ENCODE measurements at regions of chr5 and their contacts with region 1.

Region 1: DNA sequence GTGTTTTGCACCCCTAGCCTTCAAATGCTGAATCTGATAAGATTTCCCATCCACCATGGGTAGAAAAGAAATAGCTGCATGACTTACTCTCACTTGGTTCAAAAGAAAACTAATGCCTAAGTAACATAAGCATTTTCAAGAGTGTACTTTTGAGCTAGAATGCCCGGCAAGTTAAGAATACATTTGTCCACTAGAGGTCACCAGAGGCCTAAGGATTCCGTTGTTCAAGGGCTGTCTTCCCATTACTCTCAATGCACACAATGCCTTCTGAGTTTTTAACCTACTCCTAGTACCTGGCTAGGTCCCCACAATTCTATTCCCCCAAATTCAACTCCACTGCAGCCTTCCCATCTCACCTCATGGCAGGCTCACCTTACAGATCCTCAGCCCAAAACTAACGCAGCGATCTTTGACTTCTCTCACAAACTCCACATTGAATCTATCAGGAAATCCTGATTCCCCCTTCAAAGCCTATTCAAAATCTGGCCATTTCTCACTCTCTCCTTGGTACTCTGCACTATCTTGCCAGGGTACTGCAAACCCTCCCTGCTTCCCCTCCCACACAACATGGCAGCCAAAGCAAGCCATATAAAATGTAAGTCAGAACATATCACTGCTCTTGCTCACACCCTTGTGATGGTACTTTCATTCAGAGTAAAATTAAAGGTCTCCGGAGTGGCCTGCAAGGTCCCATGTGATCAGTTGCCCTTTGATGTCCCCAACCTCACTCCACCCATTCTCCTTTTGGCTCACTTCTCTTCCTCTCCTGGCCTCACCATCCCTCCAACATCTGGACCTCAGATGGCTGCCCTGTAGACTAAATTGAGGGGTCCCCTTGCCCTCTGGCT is 13.4 kb downstream of the OXCT1 start:
- DNase-seq: peak; percentile 64

Region 2: GRCh38 chr5:42057254-42057690 is 200.4 kb after region 1 on chr5:
- CTCF ChIA-PET with region 1: interaction called, 30 read pairs
- POLR2A ChIA-PET with region 1: no interaction called
- DNase-seq: peak; percentile 63

Measured in HEK293T (cell line).